ENCODE measurements at regions of chr18 and their contacts with region 1.

Region 1: GRCh38 chr18:4544134-4544533 is 89.0 kb upstream of the DLGAP1 start:
- DNase-seq: no peak
- ATAC-seq: no peak
- H3K4me3 ChIP-seq: no peak overlapping the region
- H3K27ac ChIP-seq: no peak overlapping the region
- H3K4me1 ChIP-seq: no peaks in the 10 kb centered on the region
- H3K27me3 ChIP-seq: no peaks in the 10 kb centered on the region

Region 2: GRCh38 chr18:4433717-4434116 is 110.4 kb before region 1 on chr18:
- intact Hi-C with region 1: no loop called
- DNase-seq: no peak
- ATAC-seq: no peak
- H3K4me3 ChIP-seq: no peak overlapping the region
- H3K27ac ChIP-seq: no peak overlapping the region
- H3K4me1 ChIP-seq: no peaks in the 10 kb centered on the region
- H3K27me3 ChIP-seq: no peaks in the 10 kb centered on the region

Region 3: DNA sequence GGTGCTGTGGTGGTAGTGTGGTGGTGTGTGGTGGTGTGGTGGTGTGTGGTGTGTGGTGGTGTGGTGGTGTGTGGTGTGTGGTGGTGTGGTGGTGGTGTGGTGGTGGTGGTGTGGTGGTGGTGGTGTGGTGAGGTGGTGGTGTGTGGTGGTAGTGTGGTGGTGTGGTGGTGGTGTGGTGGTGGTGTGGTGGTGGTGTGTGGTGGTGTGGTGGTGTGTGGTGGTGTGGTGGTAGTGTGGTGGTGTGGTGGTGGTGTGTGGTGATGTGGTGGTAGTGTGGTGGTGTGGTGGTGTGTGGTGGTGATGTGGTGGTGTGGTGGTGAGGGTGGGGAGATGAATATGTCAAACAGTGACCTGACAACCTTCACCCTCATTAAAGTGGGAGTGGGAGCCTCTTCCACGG is 33.4 kb before region 1 on chr18:
- intact Hi-C with region 1: no loop called
- DNase-seq: no peak
- ATAC-seq: peak; percentile 95
- H3K4me3 ChIP-seq: no peak overlapping the region
- H3K27ac ChIP-seq: no peak overlapping the region
- H3K4me1 ChIP-seq: no peaks in the 10 kb centered on the region
- H3K27me3 ChIP-seq: no peaks in the 10 kb centered on the region

Region 4: GRCh38 chr18:4704781-4705180 is 160.6 kb after region 1 on chr18:
- intact Hi-C with region 1: loop called in 1 of 2 experiments (anchors 10 kb)
- DNase-seq: no peak
- ATAC-seq: no peak
- H3K4me3 ChIP-seq: no peak overlapping the region
- H3K27ac ChIP-seq: no peak overlapping the region
- H3K4me1 ChIP-seq: no peaks in the 10 kb centered on the region
- H3K27me3 ChIP-seq: no peaks in the 10 kb centered on the region